Transverse colon (tissue), 4 donors: ENCODE measurements at regions of chr14 and their contacts with region 1.

Region 1: GRCh38 chr14:67111022-67111421 is 78.2 kb upstream of the GARIN2 start:
- DNase-seq: no peak
- H3K4me3 ChIP-seq: no peak overlapping the region
- H3K27ac ChIP-seq: no peak overlapping the region
- H3K4me1 ChIP-seq: no peaks in the 10 kb centered on the region
- H3K27me3 ChIP-seq: no peaks in the 10 kb centered on the region
- CTCF ChIP-seq: no peak
- EP300 ChIP-seq: no peak
- POLR2A ChIP-seq: no peak

Region 2: DNA sequence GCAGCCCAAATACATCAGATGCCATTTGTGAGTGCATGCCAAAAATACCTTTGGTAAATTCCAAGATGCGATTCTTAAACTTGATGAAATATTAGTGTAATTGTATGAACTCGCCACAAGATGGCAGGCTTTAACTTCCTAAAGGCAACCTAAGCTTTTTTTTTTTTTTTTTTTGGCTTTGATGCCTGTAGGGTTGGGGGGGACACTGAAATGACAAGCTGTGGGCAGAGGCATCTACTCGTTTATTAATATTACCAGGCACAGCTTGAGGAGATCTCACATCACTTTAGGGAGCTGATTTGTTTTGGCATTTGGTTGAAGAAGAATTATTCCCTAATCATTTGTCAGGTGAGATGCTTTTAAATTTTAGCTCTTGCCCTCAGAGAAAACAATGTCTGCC is 751.5 kb before region 1 on chr14:
- in situ Hi-C with region 1: loop called in 3 of 4 experiments (anchors 25 kb)
- intact Hi-C with region 1: no loop called
- DNase-seq: no peak
- H3K4me3 ChIP-seq: no peak overlapping the region
- H3K27ac ChIP-seq: no peak overlapping the region
- H3K4me1 ChIP-seq: peaks cover 0 to 8% (median 0%) of the 10 kb centered on the region in 4 donors
- H3K27me3 ChIP-seq: no peaks in the 10 kb centered on the region
- CTCF ChIP-seq: peak; percentile 63 to 67 (median 64)
- EP300 ChIP-seq: no peak
- POLR2A ChIP-seq: no peak

Region 3: DNA sequence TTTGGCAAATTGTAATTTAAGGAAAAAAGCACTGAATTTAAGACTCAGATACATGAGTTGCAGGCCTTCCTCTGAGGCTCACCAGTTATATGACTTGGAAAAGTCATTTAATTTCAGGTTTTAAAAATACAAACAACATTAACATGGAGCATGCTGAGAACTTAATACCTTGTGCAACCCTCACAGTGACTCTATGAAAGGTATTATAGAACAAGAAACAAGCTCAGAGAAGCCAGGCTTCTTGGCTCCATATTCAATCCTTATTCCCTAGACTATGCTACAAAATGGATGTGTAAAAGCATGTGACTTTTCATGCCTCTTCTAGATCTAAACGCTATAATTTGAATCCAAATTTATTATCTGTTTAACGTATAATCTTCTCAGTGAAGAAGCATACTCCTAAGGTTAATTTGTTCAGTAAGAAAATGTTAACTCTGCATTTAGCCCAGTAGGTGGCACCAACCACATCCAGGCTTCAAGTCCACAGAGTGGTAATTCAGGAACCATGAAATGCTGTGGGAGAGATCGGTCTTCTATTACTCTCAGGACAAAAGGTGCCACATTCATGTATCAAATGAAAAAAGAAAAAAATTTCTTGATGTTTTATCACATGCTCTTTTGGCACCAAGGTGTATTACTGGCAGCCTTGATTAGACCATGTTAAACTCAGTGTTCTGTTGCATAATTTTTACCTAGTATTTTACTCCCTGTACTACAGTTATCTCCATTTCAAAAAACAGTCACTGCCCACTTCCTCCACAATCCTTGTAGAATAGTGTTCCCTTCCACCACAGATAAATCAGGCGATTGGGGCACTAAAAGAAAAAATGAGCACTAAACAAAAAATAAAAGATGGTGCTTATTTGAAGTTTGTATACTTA is 615.6 kb before region 1 on chr14:
- in situ Hi-C with region 1: loop called in 1 of 4 experiments (anchors 25 kb)
- intact Hi-C with region 1: no loop called
- DNase-seq: peak; percentile 33
- H3K4me3 ChIP-seq: peak overlapping the region in 1 of 4 donors; percentile 20
- H3K27ac ChIP-seq: no peak overlapping the region
- H3K4me1 ChIP-seq: peaks cover 0 to 26% (median 4%) of the 10 kb centered on the region in 4 donors
- H3K27me3 ChIP-seq: no peaks in the 10 kb centered on the region
- CTCF ChIP-seq: peak; percentile 68 to 76 (median 73)
- EP300 ChIP-seq: no peak
- POLR2A ChIP-seq: no peak

Region 4: DNA sequence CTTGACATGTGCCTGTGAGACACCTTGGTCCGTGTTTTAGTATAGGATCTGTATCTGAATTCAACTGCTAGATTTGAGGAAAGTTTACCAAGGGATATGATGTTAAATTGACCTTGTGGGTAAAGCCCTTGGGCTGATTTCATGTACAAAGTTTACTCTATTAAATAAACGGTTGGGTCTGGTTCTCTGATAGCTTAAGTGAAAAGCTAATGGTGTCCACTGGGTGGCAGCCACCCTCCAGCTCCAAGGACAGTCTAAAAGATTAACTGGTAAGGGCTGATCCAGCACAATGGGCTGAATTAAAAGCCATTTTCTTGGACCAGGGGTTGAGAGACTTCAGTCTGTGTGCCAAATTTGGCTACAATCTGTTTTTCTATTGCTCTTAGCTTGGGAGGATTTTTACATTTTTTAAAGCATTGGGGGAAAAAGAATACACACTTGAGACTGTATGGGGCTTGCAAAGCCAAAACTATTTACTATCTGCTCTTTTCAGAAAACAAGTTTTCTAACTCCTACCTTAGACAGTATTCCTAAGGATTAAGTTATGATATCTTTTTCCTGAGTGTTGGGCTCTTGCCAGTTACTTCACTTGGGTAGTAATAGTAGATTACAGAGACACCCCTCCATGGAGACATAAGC is 486.6 kb before region 1 on chr14:
- in situ Hi-C with region 1: loop called in 1 of 4 experiments (anchors 25 kb)
- intact Hi-C with region 1: no loop called
- DNase-seq: peak; percentile 35
- H3K4me3 ChIP-seq: no peak overlapping the region
- H3K27ac ChIP-seq: no peak overlapping the region
- H3K4me1 ChIP-seq: peaks cover 0 to 13% (median 2%) of the 10 kb centered on the region in 4 donors
- H3K27me3 ChIP-seq: no peaks in the 10 kb centered on the region
- CTCF ChIP-seq: peak; percentile 49 to 59 (median 56)
- EP300 ChIP-seq: no peak
- POLR2A ChIP-seq: no peak

Region 5: GRCh38 chr14:67158566-67158965 is 47.5 kb after region 1 on chr14:
- in situ Hi-C with region 1: no loop called
- intact Hi-C with region 1: no loop called
- DNase-seq: no peak
- H3K4me3 ChIP-seq: no peak overlapping the region
- H3K27ac ChIP-seq: no peak overlapping the region
- H3K4me1 ChIP-seq: no peaks in the 10 kb centered on the region
- H3K27me3 ChIP-seq: no peaks in the 10 kb centered on the region
- CTCF ChIP-seq: no peak
- EP300 ChIP-seq: no peak
- POLR2A ChIP-seq: no peak